MCF 10A (cell line): ENCODE measurements at regions of chr15 and their contacts with region 1.

Region 1: DNA sequence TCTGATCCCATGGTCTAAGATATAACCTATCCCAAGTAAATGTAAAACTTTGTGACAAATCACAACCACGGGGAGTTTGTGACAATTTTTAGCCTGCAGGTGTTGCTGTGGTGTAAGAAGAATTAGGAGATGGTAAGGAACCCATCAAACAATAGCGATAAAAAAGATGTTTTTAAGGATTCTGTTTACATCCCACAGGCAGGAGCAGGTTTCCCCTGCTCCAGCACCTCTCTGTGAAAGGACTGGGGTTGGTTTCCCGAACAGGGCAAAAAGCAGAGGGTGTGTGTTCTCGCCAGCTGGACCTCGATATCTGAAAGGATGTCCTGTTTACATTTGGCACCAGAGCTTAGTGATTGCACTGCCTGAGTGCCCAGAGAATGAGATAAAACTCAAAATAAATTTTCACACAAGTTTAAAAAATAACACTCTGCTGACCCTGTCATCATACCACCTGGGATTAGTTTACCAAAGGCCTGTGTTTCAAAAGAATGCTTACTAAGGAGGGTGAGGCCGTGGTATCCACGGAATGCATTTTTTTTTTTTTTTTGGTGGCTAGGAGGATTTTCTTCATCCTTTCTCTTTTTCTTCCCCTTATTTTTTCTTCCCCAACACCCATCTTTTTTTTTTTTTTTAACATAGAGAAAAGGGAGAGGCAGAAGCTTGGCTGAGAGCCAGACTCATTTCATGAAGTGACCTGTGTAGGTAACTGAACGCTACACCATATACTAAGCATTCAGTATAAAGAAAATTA is 151.8 kb upstream of the DPH6 start:
- DNase-seq: peak; percentile 25
- H3K4me3 Mint-ChIP-seq: peak overlapping the region; percentile 32
- H3K27ac Mint-ChIP-seq: peak overlapping the region; percentile 40
- H3K4me1 Mint-ChIP-seq: peaks cover 33% of the 10 kb centered on the region
- H3K27me3 Mint-ChIP-seq: no peaks in the 10 kb centered on the region
- CTCF ChIP-seq: no peak

Region 2: GRCh38 chr15:35540885-35541284 is 156.8 kb before region 1 on chr15:
- CTCF ChIA-PET with region 1: interaction called, 3 read pairs
- POLR2A ChIA-PET with region 1: interaction called, 4 read pairs
- intact Hi-C with region 1: loop called (anchors 5 kb)
- DNase-seq: peak; percentile 4
- H3K4me3 Mint-ChIP-seq: no peak overlapping the region
- H3K27ac Mint-ChIP-seq: peak overlapping the region; percentile 47
- H3K4me1 Mint-ChIP-seq: peaks cover 13% of the 10 kb centered on the region
- H3K27me3 Mint-ChIP-seq: no peaks in the 10 kb centered on the region
- CTCF ChIP-seq: no peak

Region 3: GRCh38 chr15:35624881-35625280 is 72.8 kb before region 1 on chr15:
- CTCF ChIA-PET with region 1: no interaction called
- POLR2A ChIA-PET with region 1: interaction called, 5 read pairs
- intact Hi-C with region 1: loop called (anchors 10 kb)
- DNase-seq: peak; percentile 85
- H3K4me3 Mint-ChIP-seq: no peak overlapping the region
- H3K27ac Mint-ChIP-seq: no peak overlapping the region
- H3K4me1 Mint-ChIP-seq: peaks cover 15% of the 10 kb centered on the region
- H3K27me3 Mint-ChIP-seq: no peaks in the 10 kb centered on the region
- CTCF ChIP-seq: no peak